ENCODE measurements at regions of chr7 and their contacts with region 1.

Region 1: GRCh38 chr7:136874238-136875032 is 6.0 kb downstream of the CHRM2 start:
- DNase-seq: no peak
- H3K4me3 ChIP-seq: no peak overlapping the region
- H3K27ac ChIP-seq: no peak overlapping the region
- H3K4me1 ChIP-seq: no peaks in the 10 kb centered on the region
- H3K27me3 ChIP-seq: peaks cover 31% of the 10 kb centered on the region
- CTCF ChIP-seq: peak; percentile 42 to 63

Region 2: GRCh38 chr7:136528329-136528728 is 346.1 kb before region 1 on chr7:
- CTCF ChIA-PET with region 1: interaction called, 11 read pairs
- dilution Hi-C with region 1: no loop called
- in situ Hi-C with region 1: no loop called
- intact Hi-C with region 1: no loop called
- DNase-seq: peak; percentile 26
- H3K4me3 ChIP-seq: no peak overlapping the region
- H3K27ac ChIP-seq: no peak overlapping the region
- H3K4me1 ChIP-seq: peaks cover 11% of the 10 kb centered on the region
- H3K27me3 ChIP-seq: no peaks in the 10 kb centered on the region
- CTCF ChIP-seq: no peak